ENCODE measurements at regions of chr6 and their contacts with region 1.

Region 1: DNA sequence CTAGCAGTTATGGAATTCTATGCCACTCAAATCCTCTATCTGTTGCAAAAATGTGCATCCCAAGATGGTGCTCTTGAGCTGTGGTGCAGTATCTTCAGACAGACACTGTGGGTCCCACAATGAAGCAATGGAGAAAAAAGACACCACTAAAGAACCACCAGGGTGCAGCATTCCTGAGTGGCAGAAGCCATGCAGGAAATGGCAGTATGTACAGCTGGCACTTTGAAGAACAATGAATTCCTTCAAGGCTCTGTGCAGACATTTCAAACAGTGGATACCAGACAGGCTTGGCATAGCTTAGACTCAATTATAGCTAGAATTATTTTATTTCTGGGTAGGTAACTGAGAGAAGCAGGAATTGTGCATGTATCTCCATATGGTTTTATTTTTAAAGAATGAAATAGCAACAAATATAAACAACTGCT is 24.0 kb upstream of the HDAC2 start:
- DNase-seq: no peak
- ATAC-seq: peak; percentile 80 to 84

Region 2: DNA sequence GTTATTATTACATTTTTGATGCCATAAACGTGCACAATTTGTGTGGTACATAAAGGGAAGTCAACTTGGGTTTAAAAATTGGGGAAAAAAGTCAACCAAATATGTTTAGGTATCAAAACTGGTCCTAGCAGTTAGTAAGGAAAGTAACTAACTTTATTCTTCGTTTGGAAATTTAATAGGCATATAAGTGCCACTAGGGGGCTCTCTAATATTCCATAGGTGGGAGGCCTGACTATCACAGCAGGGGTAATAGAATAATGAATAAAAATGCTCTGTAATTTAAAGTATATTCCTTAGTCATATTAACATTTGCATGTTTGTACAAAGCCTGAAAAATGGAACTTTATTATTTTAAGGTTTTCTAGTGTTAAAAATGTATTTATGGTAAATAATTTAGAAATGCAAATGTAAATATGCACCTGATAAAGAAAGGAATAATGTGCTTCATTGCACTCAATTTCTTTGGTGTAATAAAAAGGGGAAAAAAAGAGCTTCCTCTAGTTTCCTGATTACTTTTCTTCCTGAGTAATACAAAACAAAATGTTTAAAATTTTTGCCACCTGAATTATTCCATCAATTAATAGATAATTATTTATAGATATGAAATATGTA is 101.7 kb after region 1 on chr6:
- intact Hi-C with region 1: loop called in 1 of 2 experiments (anchors 10 kb)
- DNase-seq: no peak
- ATAC-seq: no peak

Region 3: GRCh38 chr6:114304304-114304887 is 309.5 kb after region 1 on chr6:
- intact Hi-C with region 1: loop called in 1 of 2 experiments (anchors 10 kb)
- DNase-seq: no peak
- ATAC-seq: no peak

Measured in left cardiac atrium (tissue), 4 donors.